ENCODE measurements at regions of chr1 and their contacts with region 1.

Region 1: GRCh38 chr1:111481387-111482221 is 7.8 kb downstream of the C1orf162 start:
- DNase-seq: peak; percentile 58
- ATAC-seq: peak; percentile 99
- H3K4me3 ChIP-seq: no peak overlapping the region
- H3K27ac ChIP-seq: no peak overlapping the region
- H3K4me1 ChIP-seq: peaks cover 5% of the 10 kb centered on the region; the same call in 1 of the 2 replicates
- H3K27me3 ChIP-seq: peaks cover 0 to 13% of the 10 kb centered on the region in 2 experiments; a peak in 2 of 5 replicates
- CTCF ChIP-seq: peak; percentile 93
- EP300 ChIP-seq: no peak
- POLR2A ChIP-seq: no peak
- RAD21 ChIP-seq: peak; percentile 92

Region 2: DNA sequence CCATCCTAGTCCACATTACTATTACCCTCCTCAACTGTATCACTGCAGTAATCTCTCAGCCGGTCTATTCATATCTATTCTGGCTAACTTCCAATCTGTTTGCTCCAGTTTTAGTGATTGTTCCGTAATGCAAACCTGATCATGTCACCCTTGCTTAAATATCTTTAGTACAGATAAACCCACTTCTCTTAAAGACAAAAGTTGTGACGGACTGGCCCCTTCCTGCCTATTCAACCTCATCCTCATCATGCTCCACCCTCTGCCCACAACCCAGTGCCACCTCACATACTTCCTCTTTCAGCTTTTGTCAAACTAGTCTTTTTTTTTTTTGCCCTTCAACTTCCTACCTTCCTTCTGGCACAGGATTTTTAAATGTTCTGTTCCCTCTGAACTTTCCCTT is 10.6 kb before region 1 on chr1:
- CTCF ChIA-PET with region 1: no interaction called
- POLR2A ChIA-PET with region 1: no interaction called
- in situ Hi-C with region 1: no loop called
- intact Hi-C with region 1: no loop called
- DNase-seq: no peak
- ATAC-seq: no peak
- H3K4me3 ChIP-seq: no peak overlapping the region
- H3K27ac ChIP-seq: no peak overlapping the region
- H3K4me1 ChIP-seq: peaks cover 16% of the 10 kb centered on the region
- H3K27me3 ChIP-seq: no peaks in the 10 kb centered on the region
- CTCF ChIP-seq: no peak
- EP300 ChIP-seq: no peak
- POLR2A ChIP-seq: no peak
- RAD21 ChIP-seq: no peak

Region 3: GRCh38 chr1:111656086-111657017 is 174.7 kb after region 1 on chr1:
- CTCF ChIA-PET with region 1: interaction called, 26 read pairs
- POLR2A ChIA-PET with region 1: no interaction called
- in situ Hi-C with region 1: no loop called
- intact Hi-C with region 1: loop called (anchors 1 kb)
- DNase-seq: peak; percentile 49
- ATAC-seq: no peak
- H3K4me3 ChIP-seq: no peak overlapping the region
- H3K27ac ChIP-seq: no peak overlapping the region
- H3K4me1 ChIP-seq: peaks cover 23% of the 10 kb centered on the region
- H3K27me3 ChIP-seq: no peaks in the 10 kb centered on the region
- CTCF ChIP-seq: peak; percentile 76
- EP300 ChIP-seq: no peak
- POLR2A ChIP-seq: no peak
- RAD21 ChIP-seq: peak; percentile 79

Region 4: GRCh38 chr1:111747282-111747734 is 265.7 kb after region 1 on chr1:
- CTCF ChIA-PET with region 1: interaction called, 19 read pairs
- POLR2A ChIA-PET with region 1: no interaction called
- in situ Hi-C with region 1: no loop called
- intact Hi-C with region 1: loop called (anchors 1 kb)
- DNase-seq: peak; percentile 81
- ATAC-seq: peak; percentile 89
- H3K4me3 ChIP-seq: no peak overlapping the region
- H3K27ac ChIP-seq: no peak overlapping the region
- H3K4me1 ChIP-seq: peaks cover 38% of the 10 kb centered on the region
- H3K27me3 ChIP-seq: no peaks in the 10 kb centered on the region
- CTCF ChIP-seq: peak; percentile 94
- EP300 ChIP-seq: no peak
- POLR2A ChIP-seq: no peak
- RAD21 ChIP-seq: peak; percentile 90

Region 5: DNA sequence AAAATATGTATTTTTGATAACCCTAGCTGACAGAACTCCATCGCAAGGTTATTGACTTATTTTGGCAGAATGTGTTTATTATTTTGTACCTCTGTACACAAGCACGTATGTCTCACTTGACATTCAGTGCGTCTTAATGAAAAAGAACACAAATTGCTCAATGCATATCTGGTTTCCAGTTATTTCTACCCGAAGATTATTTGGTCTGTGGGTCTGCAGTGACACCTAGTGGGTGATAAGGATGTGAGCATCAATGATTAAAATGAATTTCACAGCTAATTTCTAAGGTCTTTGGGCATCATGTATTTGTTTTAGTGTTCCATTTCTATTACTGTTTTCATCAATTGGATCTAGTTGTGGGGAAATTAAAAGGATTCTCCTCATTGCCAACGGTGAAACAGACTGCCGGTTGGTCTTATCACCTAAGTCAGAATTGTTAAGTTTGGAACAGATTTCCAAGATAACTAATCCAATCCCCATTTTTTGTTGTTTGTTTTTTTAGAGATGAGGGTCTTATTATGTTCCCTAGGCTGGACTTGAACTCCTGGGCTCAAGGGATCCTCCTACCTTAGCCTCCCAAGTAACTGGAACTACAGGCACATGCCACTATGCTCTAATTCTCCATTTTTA is 288.0 kb after region 1 on chr1:
- CTCF ChIA-PET with region 1: interaction called, 3 read pairs
- POLR2A ChIA-PET with region 1: no interaction called
- in situ Hi-C with region 1: loop called (anchors 5 kb)
- intact Hi-C with region 1: loop called (anchors 1 kb)
- DNase-seq: peak; percentile 65
- ATAC-seq: no peak
- H3K4me3 ChIP-seq: no peak overlapping the region
- H3K27ac ChIP-seq: no peak overlapping the region
- H3K4me1 ChIP-seq: peaks cover 12% of the 10 kb centered on the region; the same call in 1 of the 2 replicates
- H3K27me3 ChIP-seq: no peaks in the 10 kb centered on the region
- CTCF ChIP-seq: peak; percentile 78
- EP300 ChIP-seq: no peak
- POLR2A ChIP-seq: no peak
- RAD21 ChIP-seq: peak; percentile 47; the same call in 1 of the 2 replicates

Measured in HepG2 (cell line).